ENCODE measurements at regions of chr19 and their contacts with region 1.

Region 1: GRCh38 chr19:13880059-13881043 is 3.4 kb downstream of the NANOS3 start:
- DNase-seq: peak; percentile 93
- ATAC-seq: peak; percentile 99
- H3K4me3 ChIP-seq: no peak overlapping the region
- H3K27ac ChIP-seq: peak overlapping the region; percentile 23
- H3K4me1 ChIP-seq: peaks cover 19% of the 10 kb centered on the region
- H3K27me3 ChIP-seq: peaks cover 2% of the 10 kb centered on the region; the same call in 1 of the 2 replicates
- CTCF ChIP-seq: peak; percentile 100
- POLR2A ChIP-seq: peak; percentile 53; the same call in 1 of the 2 replicates
- RAD21 ChIP-seq: peak; percentile 99

Region 2: DNA sequence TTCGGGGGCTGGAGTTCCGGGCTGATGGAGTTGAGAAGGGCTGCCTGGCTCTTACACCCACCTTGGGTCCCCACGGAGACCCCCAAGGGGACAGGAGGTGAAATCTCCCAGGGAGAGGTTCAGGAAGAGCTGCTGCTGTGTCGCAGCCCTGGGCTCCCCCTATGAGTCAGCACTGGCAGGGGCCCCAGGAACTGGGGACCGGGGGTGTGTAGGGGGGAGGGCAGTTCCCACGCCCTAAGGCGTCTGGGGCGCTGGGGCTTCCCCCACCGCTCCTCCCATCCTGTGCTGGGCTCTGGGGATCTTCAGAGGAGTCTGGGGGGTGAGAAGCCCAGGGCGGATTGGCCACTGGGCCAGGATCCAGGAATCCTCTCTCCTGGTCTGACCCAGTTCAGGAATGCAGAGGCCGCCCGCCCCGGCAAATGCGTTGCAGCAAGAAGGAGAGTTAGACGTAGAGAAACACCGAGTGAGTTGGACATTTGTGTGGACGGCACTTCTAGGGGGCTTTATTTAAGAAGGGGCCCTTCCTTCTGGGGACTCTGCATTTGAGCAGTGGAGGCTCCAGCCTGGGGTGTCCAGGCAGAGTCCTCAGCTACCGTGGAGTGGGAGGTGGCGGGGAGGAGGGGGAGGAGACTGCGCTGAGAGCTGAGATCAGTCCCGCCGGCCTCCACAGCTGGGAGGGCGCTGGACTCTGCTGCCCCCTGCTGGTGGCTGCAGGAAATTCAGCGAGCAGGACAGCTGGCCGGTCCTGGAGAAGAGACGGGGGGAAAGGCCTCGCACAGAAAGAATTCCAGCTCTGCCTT is 18.4 kb before region 1 on chr19:
- CTCF ChIA-PET with region 1: no interaction called
- POLR2A ChIA-PET with region 1: no interaction called
- dilution Hi-C with region 1: no loop called
- in situ Hi-C with region 1: no loop called
- intact Hi-C with region 1: no loop called
- DNase-seq: peak; percentile 87
- ATAC-seq: peak; percentile 86
- H3K4me3 ChIP-seq: peak overlapping the region; percentile 45
- H3K27ac ChIP-seq: peak overlapping the region; percentile 95
- H3K4me1 ChIP-seq: peaks cover 13% of the 10 kb centered on the region
- H3K27me3 ChIP-seq: no peaks in the 10 kb centered on the region
- CTCF ChIP-seq: peak; percentile 97
- POLR2A ChIP-seq: peak; percentile 71; the same call in 1 of the 2 replicates
- RAD21 ChIP-seq: peak; percentile 95

Region 3: DNA sequence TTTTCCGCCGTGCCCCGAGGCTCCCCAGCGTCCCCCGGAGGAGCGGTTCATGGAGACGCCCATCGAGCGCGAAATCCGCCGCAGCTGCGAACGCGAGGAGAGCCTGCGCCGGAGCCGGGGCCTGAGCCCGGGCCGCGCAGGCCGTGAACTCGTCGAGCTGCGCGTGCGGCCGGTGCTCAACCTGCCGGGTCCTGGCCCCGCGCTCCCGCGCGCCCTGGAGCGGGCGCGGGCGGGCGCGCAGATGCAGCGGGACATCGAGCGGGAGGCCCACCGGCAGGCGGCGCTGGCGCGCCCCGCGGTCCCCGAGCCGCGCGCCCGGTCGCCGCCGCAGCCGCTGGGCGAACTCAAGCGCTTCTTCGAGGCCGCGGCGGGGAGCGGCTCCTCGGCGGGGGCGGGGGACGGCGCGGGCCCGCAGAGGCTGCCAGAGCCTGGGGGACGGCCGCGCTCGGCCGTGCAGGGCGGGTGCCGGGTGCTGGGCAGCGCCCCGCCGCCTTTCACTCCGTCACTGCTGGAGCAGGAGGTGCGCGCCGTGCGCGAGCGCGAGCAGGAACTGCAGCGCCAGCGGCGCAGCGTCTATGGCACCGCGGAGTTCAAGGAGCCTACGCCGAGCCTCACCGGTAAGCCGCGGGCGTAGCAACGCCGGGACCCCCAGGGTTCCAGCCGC is 193.0 kb after region 1 on chr19:
- CTCF ChIA-PET with region 1: no interaction called
- POLR2A ChIA-PET with region 1: no interaction called
- dilution Hi-C with region 1: no loop called
- in situ Hi-C with region 1: loop called (anchors 5 kb)
- intact Hi-C with region 1: loop called (anchors 1 kb)
- DNase-seq: peak; percentile 82
- ATAC-seq: peak; percentile 79
- H3K4me3 ChIP-seq: peak overlapping the region; percentile 61
- H3K27ac ChIP-seq: peak overlapping the region; percentile 13; the same call in 1 of the 2 replicates
- H3K4me1 ChIP-seq: peaks cover 10% of the 10 kb centered on the region
- H3K27me3 ChIP-seq: peaks cover 2% of the 10 kb centered on the region; the same call in 1 of the 2 replicates
- CTCF ChIP-seq: peak; percentile 66
- POLR2A ChIP-seq: no peak
- RAD21 ChIP-seq: peak; percentile 29

Region 4: DNA sequence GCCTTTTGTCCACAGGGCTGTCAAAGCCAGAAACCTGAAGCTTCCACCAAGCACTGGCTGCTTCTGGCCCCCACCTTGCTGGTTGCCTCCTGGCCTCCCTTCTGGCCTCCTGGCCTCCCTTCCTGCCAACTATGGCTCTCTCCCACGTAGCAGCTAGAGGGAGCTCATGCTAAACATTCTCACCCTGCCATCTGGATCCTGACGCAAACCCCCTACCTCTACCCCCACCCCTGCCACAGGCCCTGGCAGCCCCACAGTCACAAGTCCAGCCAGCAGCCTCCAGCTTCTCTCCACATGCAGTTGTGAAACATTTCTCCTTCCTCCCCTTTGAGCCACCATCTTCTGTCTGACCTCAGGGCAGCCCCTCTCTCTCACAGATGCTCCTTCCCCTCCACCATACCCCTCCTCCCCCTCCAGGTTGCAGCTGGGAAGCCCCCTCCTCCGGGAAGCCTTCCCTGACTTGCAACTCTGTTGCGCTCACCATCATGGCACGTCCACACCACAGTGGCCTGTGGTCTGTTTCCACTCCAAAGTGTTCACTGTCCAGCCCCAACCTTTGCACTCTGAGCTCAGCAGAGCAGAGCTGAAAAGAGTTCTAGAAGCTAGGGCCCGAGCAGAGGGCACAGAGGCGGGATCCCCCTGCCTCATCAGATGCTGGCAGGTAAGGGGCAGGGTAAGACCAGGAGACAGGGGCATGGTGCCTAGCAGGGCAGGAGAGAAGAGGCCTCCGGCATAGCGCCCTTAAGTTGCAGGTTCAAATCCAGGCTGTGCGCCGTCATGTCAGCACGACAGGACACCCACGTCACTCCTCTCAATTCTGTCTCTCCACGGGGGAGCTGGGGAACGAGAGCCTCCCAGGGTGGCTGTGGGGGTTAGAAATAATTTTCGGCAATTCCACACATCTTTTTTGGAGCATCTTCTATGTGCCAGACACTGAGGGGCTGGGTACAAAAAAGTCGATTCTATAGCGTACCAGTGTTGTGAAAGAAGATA is 318.3 kb after region 1 on chr19:
- CTCF ChIA-PET with region 1: no interaction called
- POLR2A ChIA-PET with region 1: no interaction called
- dilution Hi-C with region 1: no loop called
- in situ Hi-C with region 1: no loop called
- intact Hi-C with region 1: loop called (anchors 5 kb)
- DNase-seq: no peak
- ATAC-seq: no peak
- H3K4me3 ChIP-seq: no peak overlapping the region
- H3K27ac ChIP-seq: no peak overlapping the region
- H3K4me1 ChIP-seq: no peaks in the 10 kb centered on the region
- H3K27me3 ChIP-seq: peaks cover 10% of the 10 kb centered on the region
- CTCF ChIP-seq: no peak
- POLR2A ChIP-seq: no peak
- RAD21 ChIP-seq: no peak

Region 5: GRCh38 chr19:14472202-14472938 is 592.0 kb after region 1 on chr19:
- CTCF ChIA-PET with region 1: no interaction called
- POLR2A ChIA-PET with region 1: no interaction called
- dilution Hi-C with region 1: no loop called
- in situ Hi-C with region 1: loop called (anchors 10 kb)
- intact Hi-C with region 1: no loop called
- DNase-seq: peak; percentile 18
- ATAC-seq: peak; percentile 55
- H3K4me3 ChIP-seq: no peak overlapping the region
- H3K27ac ChIP-seq: no peak overlapping the region
- H3K4me1 ChIP-seq: peaks cover 25% of the 10 kb centered on the region
- H3K27me3 ChIP-seq: no peaks in the 10 kb centered on the region
- CTCF ChIP-seq: peak; percentile 74
- POLR2A ChIP-seq: no peak
- RAD21 ChIP-seq: peak; percentile 51

Measured in IMR-90 (cell line).